ENCODE measurements at regions of chr5 and their contacts with region 1.

Region 1: GRCh38 chr5:43602461-43603343 is at the start of gene NNT:
- DNase-seq: peak; percentile 84
- H3K4me3 Mint-ChIP-seq: peak within 1 kb of the TSS; percentile 91
- H3K27ac Mint-ChIP-seq: peak within 1 kb of the TSS; percentile 84
- H3K4me1 Mint-ChIP-seq: peaks cover 41% of the 10 kb centered on the region
- H3K27me3 Mint-ChIP-seq: no peaks in the 10 kb centered on the region
- total RNA-seq, gene NNT: 96.4 to 110 TPM

Region 2: GRCh38 chr5:43514816-43515677 is 87.7 kb before region 1 on chr5 and contains the start of gene C5orf34:
- CTCF ChIA-PET with region 1: interaction called, 7 read pairs
- POLR2A ChIA-PET with region 1: interaction called, 16 read pairs
- DNase-seq: peak; percentile 94
- H3K4me3 Mint-ChIP-seq: peak within 1 kb of the TSS; percentile 94
- H3K27ac Mint-ChIP-seq: peak within 1 kb of the TSS; percentile 97
- H3K4me1 Mint-ChIP-seq: peaks cover 37% of the 10 kb centered on the region
- H3K27me3 Mint-ChIP-seq: no peaks in the 10 kb centered on the region
- total RNA-seq, gene C5orf34: 7.7 to 8.5 TPM

Region 3: GRCh38 chr5:43616535-43616934 is 13.8 kb after region 1 on chr5:
- CTCF ChIA-PET with region 1: interaction called, 3 read pairs
- POLR2A ChIA-PET with region 1: interaction called, 17 read pairs
- DNase-seq: no peak
- H3K4me3 Mint-ChIP-seq: no peak overlapping the region
- H3K27ac Mint-ChIP-seq: no peak overlapping the region
- H3K4me1 Mint-ChIP-seq: peaks cover 2% of the 10 kb centered on the region
- H3K27me3 Mint-ChIP-seq: no peaks in the 10 kb centered on the region

Region 4: GRCh38 chr5:43833961-43834360 is 231.3 kb after region 1 on chr5:
- CTCF ChIA-PET with region 1: no interaction called
- POLR2A ChIA-PET with region 1: no interaction called
- DNase-seq: no peak
- H3K4me3 Mint-ChIP-seq: no peak overlapping the region
- H3K27ac Mint-ChIP-seq: no peak overlapping the region
- H3K4me1 Mint-ChIP-seq: no peaks in the 10 kb centered on the region
- H3K27me3 Mint-ChIP-seq: no peaks in the 10 kb centered on the region